ENCODE measurements at regions of chr4 and their contacts with region 1.

Region 1: GRCh38 chr4:2755837-2756694 is at the start of gene TNIP2:
- DNase-seq: peak; percentile 89 to 92
- ATAC-seq: peak; percentile 76 to 93 (median 90)
- H3K4me3 ChIP-seq: peak within 1 kb of the TSS; percentile 72 to 99 (median 88)
- H3K27ac ChIP-seq: peak within 1 kb of the TSS; percentile 70 to 98 (median 90)
- H3K4me1 ChIP-seq: peaks cover 1 to 36% (median 17%) of the 10 kb centered on the region in 9 donors
- H3K27me3 ChIP-seq: no peaks in the 10 kb centered on the region
- CTCF ChIP-seq: peak in 8 of 9 donors; percentile 8 to 65 (median 37)
- total RNA-seq, gene TNIP2: 12.6 to 33.7 (median 14.5) TPM

Region 2: GRCh38 chr4:2689825-2690700 is 66.0 kb before region 1 on chr4:
- intact Hi-C with region 1: no loop called
- DNase-seq: no peak
- ATAC-seq: peak in 1 of 8 donors; percentile 26
- H3K4me3 ChIP-seq: no peak overlapping the region
- H3K27ac ChIP-seq: no peak overlapping the region
- H3K4me1 ChIP-seq: peaks cover 0 to 4% (median 0%) of the 10 kb centered on the region in 9 donors
- H3K27me3 ChIP-seq: no peaks in the 10 kb centered on the region
- CTCF ChIP-seq: no peak

Region 3: DNA sequence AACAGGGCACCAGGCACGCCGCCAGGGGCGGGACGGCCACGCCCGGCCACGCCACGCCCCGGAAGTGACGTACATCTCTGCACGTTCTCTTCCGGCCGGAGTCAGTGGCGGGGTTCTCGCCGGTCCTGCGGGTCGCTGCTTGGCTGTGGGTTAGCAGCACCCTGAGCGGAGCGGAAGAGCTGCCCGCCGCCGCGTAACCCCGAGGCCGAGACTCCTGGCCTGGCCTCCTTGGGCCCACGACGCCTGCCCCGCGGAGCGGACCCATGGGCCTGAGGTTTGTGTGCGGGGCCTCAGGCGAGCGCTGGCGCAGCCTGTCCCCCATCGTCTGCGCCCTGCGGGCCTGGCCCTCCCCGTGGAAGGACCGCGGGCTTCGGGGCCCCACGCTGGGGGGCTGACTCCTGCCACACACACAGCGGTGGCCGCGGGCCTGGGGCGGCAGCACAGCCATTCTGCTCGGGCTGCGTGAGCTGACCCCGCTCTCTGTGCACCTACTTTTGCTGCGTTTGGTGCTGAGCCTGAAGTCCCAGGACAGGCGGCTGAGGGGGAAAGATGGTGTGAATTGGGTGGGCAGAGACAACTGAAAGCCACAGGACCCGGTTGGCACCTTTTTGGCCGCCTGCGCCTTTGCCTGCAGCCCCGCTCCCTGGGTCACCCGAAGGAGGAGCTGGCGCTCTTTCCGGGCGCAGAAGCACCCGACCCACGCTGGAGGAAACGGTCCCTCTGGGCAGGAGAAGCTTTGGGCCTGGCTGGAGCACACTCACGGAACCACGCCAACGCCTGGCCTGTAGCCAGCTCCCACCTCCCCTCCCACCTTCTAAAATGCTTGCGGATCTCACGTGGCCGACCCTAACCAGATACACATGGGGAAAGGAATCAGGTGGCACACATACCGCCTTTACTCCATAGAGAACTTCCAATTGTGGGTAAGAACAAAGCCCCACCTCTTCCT is 179.0 kb after region 1 on chr4:
- intact Hi-C with region 1: loop called in 8 of 10 experiments (anchors 5 to 10 kb)
- DNase-seq: peak; percentile 95 to 98
- ATAC-seq: peak; percentile 80 to 90 (median 84)
- H3K4me3 ChIP-seq: peak overlapping the region; percentile 54 to 100 (median 94)
- H3K27ac ChIP-seq: peak overlapping the region; percentile 74 to 95 (median 90)
- H3K4me1 ChIP-seq: peaks cover 7 to 61% (median 57%) of the 10 kb centered on the region in 9 donors
- H3K27me3 ChIP-seq: no peaks in the 10 kb centered on the region
- CTCF ChIP-seq: peak in 2 of 9 donors; percentile 6 to 13

Region 4: GRCh38 chr4:2963175-2963965 is 207.3 kb after region 1 on chr4 and contains the starts of genes GRK4 and NOP14:
- intact Hi-C with region 1: loop called in 1 of 10 experiments (anchors 5 kb)
- DNase-seq: peak; percentile 97 to 98
- ATAC-seq: peak; percentile 97 to 99 (median 98)
- H3K4me3 ChIP-seq: peak within 1 kb of the TSS; percentile 77 to 99 (median 97)
- H3K27ac ChIP-seq: peak within 1 kb of the TSS; percentile 86 to 95 (median 92)
- H3K4me1 ChIP-seq: peaks cover 9 to 36% (median 25%) of the 10 kb centered on the region in 9 donors
- H3K27me3 ChIP-seq: no peaks in the 10 kb centered on the region
- CTCF ChIP-seq: peak in 8 of 9 donors; percentile 21 to 64 (median 41)
- total RNA-seq, gene GRK4: 6.2 to 13.4 (median 10.3) TPM
- total RNA-seq, gene NOP14: 12.4 to 24.0 (median 17.3) TPM

Region 5: DNA sequence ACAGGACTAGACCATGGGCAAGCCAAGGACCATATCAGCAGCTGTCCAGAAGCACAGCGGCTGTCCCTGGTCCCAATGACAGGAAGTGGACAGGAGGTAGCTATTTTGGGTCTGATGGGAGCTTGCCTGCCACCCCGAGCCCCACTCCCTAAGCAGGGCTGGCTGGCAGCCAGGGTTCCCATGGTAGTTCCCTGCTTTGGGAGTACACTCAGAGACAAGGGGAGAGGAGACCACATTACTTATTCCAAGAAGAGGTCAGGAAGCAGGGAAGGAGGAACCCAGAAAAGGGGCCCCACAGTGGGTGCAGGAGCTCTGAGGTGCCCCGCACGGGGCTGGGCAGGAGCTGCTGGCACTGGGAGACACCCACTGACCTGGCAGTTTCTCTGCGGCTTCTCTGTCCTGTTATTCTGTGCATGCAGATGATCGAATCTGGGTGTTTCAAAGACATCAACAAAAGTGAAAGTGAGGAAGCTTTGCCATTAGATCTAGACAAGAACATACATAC is 281.9 kb after region 1 on chr4:
- intact Hi-C with region 1: loop called in 3 of 10 experiments (anchors 10 kb)
- DNase-seq: peak; percentile 65 to 82
- ATAC-seq: peak in 7 of 8 donors; percentile 16 to 70 (median 66)
- H3K4me3 ChIP-seq: peak overlapping the region in 9 of 10 donors; percentile 5 to 46 (median 30)
- H3K27ac ChIP-seq: peak overlapping the region in 8 of 10 donors; percentile 5 to 75 (median 46)
- H3K4me1 ChIP-seq: peaks cover 0 to 42% (median 34%) of the 10 kb centered on the region in 9 donors
- H3K27me3 ChIP-seq: no peaks in the 10 kb centered on the region
- CTCF ChIP-seq: no peak

Region 6: DNA sequence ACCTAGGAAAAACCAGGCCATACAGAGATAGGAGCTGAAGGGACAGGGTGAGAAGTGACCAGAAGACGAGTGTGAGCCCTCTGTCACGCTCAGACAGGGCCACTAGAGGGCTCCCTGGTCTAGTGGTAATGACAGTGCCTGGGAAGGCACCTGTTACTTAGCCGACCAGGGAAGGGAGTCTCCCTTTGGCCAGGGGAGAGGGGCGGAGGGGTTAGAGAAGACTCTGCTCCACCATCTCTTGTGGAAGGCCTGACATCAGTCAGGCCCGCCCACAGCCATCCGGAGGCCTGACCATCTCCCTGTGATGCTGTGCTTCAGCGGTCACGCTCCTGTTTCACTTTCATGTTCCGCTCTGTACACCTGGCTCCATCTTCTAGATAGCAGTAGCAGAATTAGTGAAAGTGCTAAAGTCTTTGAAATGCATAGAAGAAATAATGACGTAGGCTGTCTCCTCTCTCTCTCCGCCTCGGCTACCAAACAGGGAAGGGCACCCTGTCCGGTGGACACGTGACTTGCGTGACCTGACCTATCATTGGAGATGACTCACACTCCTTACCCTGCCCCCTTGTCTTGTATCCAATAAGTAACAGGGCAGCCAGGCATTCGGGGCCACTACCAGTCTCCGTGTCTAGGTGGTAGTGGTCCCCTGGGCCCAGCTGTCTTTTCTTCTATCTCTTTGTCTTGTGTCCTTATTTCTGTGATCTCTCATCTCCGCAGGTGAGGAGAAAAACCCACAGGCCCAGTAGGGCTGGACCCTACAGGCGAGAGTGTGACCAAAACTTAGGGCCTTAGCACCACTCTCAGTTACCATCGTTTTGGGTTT is 291.6 kb after region 1 on chr4:
- intact Hi-C with region 1: loop called in 2 of 10 experiments (anchors 10 kb)
- DNase-seq: peak; percentile 57 to 62
- ATAC-seq: peak; percentile 45 to 68 (median 62)
- H3K4me3 ChIP-seq: peak overlapping the region in 5 of 10 donors; percentile 17 to 45 (median 31)
- H3K27ac ChIP-seq: peak overlapping the region in 1 of 10 donors; percentile 60
- H3K4me1 ChIP-seq: peaks cover 0 to 45% (median 12%) of the 10 kb centered on the region in 9 donors
- H3K27me3 ChIP-seq: no peaks in the 10 kb centered on the region
- CTCF ChIP-seq: peak; percentile 47 to 87 (median 76)

Measured in heart right ventricle (tissue), 16 donors.